ENCODE measurements at regions of chr17 and their contacts with region 1.

Region 1: DNA sequence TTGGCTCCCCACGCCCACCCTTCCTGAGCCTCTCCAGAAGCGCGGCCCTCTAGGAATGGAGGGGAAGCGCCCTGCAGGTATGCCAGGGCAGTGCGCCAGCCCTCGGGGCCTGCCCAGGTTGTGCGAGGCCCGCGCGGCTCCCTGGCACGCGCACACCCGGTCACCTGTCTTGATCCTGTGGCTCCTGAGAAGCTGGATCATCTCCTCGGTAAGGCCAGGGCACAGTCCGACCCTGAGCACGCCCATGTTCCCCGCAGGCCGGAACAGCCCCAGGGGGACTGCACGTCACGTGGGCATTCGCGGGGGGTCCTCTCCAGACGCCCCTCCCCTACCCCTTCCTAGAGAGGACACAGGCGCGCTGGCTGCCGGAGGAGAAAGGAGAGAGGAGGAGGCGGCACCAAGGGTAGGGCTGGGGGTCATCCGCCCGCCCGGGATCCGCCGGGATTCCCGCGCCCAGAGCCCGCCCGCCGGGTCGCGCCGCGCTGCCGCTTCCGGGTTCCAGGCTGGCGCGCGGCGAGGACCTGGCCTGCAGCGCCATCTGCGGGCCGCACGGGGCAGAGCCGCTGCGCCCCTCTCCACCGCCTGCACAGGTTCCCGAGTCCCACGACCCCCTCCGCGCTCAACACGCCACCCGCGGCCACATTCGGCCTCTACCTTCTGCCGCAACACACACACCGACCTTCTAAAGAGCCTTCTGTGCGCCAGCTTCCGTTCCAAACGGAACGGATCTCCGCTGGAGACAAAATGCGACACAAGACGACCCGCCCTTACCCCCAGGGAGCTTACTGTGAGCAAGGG is at the start of gene RAD51D:
- DNase-seq: peak; percentile 87 to 95 (median 94)
- H3K4me3 ChIP-seq: peak within 1 kb of the TSS; percentile 78 to 94 (median 87)
- H3K27ac ChIP-seq: peak within 1 kb of the TSS; percentile 46 to 79
- H3K4me1 ChIP-seq: peaks cover 0 to 19% (median 16%) of the 10 kb centered on the region in 4 experiments
- H3K27me3 ChIP-seq: no peaks in the 10 kb centered on the region

Region 2: DNA sequence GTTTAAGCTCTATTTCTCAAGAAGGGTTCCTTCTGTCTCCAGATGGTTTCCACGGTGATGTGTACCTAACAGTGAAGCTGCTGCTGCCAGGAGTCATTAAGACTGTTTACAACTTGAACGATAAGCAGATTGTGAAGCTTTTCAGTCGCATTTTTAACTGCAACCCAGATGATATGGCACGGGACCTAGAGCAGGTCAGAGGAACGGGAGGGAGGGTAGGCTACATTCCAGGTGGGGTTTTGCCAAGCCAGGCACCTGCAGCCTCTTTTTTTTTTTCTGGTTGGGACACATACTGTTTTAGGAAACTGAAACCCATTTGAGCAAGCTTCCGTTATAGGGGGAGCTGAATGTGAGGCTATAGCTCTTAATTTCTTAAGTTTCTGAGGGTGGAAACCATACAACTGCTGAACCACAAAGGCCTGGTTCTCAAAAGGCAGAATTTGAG is 128.6 kb before region 1 on chr17:
- CTCF ChIA-PET with region 1: interaction called, 156 read pairs
- POLR2A ChIA-PET with region 1: no interaction called
- DNase-seq: peak in 1 of 3 donors; percentile 24
- H3K4me3 ChIP-seq: no peak overlapping the region
- H3K27ac ChIP-seq: no peak overlapping the region
- H3K4me1 ChIP-seq: peaks cover 0 to 14% (median 4%) of the 10 kb centered on the region in 4 experiments
- H3K27me3 ChIP-seq: no peaks in the 10 kb centered on the region

Region 3: GRCh38 chr17:34998205-34998604 is 121.4 kb before region 1 on chr17:
- CTCF ChIA-PET with region 1: interaction called, 156 read pairs
- POLR2A ChIA-PET with region 1: interaction called, 3 read pairs
- DNase-seq: peak; percentile 71 to 85 (median 81)
- H3K4me3 ChIP-seq: no peak overlapping the region
- H3K27ac ChIP-seq: no peak overlapping the region
- H3K4me1 ChIP-seq: peaks cover 0 to 3% (median 2%) of the 10 kb centered on the region in 4 experiments
- H3K27me3 ChIP-seq: no peaks in the 10 kb centered on the region

Region 4: DNA sequence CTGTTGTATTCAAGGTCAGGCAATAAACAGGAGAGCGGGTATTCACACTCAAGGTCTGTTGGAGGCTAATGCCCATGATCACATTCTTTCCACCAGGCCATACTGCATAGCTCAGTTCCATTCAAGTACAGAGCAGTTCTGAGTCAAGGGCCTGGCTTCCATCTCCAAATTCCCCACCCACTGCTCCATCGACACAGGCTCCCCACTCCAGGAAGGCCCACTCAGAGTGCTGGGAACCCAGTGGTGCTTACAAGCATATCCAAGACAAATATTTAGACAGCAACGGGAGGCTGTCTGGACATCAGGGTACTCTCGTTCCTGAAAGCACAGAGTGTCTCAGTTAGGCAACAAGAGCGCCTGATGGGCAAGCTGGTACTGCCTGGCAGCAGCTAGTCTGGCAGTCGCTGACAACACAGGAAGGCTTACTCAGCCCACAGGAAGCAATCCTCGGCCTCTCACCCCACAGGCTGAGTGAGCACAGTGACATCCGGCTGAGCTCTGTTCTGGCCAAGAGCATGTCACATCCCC is 97.0 kb before region 1 on chr17:
- CTCF ChIA-PET with region 1: interaction called, 10 read pairs
- POLR2A ChIA-PET with region 1: interaction called, 4 read pairs
- DNase-seq: peak; percentile 50 to 79 (median 72)
- H3K4me3 ChIP-seq: peak overlapping the region in 1 of 7 experiments; percentile 12
- H3K27ac ChIP-seq: no peak overlapping the region
- H3K4me1 ChIP-seq: peaks cover 2 to 15% (median 12%) of the 10 kb centered on the region in 4 experiments
- H3K27me3 ChIP-seq: no peaks in the 10 kb centered on the region

Region 5: DNA sequence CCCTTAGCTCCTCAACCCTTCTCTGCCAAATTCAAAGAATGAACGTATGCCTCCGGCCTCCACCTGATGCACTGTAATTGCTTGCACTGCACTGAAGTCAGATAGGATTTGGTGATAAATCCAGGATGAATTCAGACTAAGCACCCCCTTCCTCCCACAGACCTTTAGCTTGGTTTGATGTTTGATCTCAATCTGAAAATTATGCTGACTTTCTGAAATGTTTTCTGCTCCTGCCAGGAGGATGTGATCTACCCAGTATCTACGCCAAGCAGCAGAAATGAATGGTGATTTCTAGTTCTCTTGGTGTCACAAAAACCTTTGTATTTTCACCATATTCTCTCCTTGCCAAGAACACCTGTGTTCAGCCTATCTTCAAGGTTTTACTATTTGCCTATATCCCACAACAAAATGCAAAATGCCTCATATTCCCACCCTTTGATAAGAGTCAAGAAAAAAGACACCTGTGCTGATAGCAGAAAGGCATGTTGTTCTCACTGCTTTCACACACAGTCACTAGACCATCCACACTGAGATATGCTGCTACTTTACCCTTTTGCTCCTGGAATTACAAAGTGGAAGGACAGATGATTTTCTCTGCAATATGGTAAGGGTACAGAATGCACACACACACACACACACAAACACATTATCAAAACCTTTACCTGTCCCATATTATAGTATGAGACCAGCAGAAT is 70.7 kb before region 1 on chr17:
- CTCF ChIA-PET with region 1: no interaction called
- POLR2A ChIA-PET with region 1: no interaction called
- DNase-seq: no peak
- H3K4me3 ChIP-seq: no peak overlapping the region
- H3K27ac ChIP-seq: no peak overlapping the region
- H3K4me1 ChIP-seq: peaks cover 32 to 43% (median 36%) of the 10 kb centered on the region in 4 experiments
- H3K27me3 ChIP-seq: no peaks in the 10 kb centered on the region

Region 6: GRCh38 chr17:35088881-35089585 is 30.5 kb before region 1 on chr17:
- CTCF ChIA-PET with region 1: interaction called, 21 read pairs
- POLR2A ChIA-PET with region 1: interaction called, 3 read pairs
- DNase-seq: peak; percentile 78 to 90 (median 89)
- H3K4me3 ChIP-seq: peak overlapping the region; percentile 58 to 95 (median 90)
- H3K27ac ChIP-seq: peak overlapping the region; percentile 72 to 84
- H3K4me1 ChIP-seq: peaks cover 12 to 35% (median 27%) of the 10 kb centered on the region in 4 experiments
- H3K27me3 ChIP-seq: no peaks in the 10 kb centered on the region

Region 7: GRCh38 chr17:35141681-35142466 is 22.3 kb after region 1 on chr17 and contains the start of gene NLE1:
- CTCF ChIA-PET with region 1: interaction called, 18 read pairs
- POLR2A ChIA-PET with region 1: no interaction called
- DNase-seq: peak; percentile 87 to 92 (median 92)
- H3K4me3 ChIP-seq: peak within 1 kb of the TSS; percentile 69 to 99 (median 91)
- H3K27ac ChIP-seq: peak within 1 kb of the TSS in 1 of 2 experiments; percentile 70
- H3K4me1 ChIP-seq: peaks cover 0 to 13% (median 8%) of the 10 kb centered on the region in 4 experiments
- H3K27me3 ChIP-seq: no peaks in the 10 kb centered on the region

Region 8: DNA sequence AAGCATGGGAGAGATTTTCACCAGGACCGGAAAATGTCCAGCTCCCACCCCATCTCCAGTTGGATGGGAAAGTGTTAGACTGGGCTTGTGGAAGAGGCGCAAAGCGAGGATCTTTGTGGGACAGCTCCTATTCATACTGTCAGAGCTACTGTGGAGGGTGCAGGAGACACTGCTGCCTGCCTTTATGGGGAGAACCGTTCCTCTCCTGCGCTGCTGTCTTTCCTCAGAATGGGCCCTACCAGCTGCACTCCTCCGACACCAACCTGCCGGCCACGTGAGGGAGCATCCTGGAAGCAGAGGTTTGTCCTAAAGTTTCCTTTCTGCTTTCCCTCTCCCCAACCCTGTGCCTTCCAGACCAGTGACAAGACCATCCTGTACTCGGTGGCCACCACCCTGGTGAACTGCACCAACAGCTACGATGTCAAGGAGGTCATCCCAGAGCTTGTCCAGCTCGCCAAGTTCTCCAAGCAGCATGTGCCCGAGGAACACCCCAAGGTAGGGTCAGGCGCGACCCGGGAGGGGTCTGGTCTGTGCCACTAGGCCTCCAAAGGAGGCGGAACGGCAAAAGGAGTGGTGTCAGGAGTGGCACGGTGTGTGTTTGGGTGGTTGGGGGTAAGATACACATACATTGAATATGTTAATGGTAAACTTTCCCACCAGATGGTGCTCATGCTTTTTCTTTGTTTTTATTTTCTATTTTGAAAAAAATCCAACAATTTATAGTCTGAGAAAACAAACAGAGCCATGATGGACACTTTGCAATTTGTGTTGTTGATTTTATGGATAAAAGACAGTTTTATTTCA is 51.6 kb after region 1 on chr17:
- CTCF ChIA-PET with region 1: no interaction called
- POLR2A ChIA-PET with region 1: no interaction called
- DNase-seq: peak; percentile 42 to 62 (median 55)
- H3K4me3 ChIP-seq: no peak overlapping the region
- H3K27ac ChIP-seq: no peak overlapping the region
- H3K4me1 ChIP-seq: no peaks in the 10 kb centered on the region
- H3K27me3 ChIP-seq: peaks cover 0 to 7% (median 0%) of the 10 kb centered on the region in 5 experiments